ENCODE measurements at regions of chr14 and their contacts with region 1.

Region 1: GRCh38 chr14:23018107-23018506 is 8.2 kb upstream of the C14orf93 start:
- DNase-seq: no peak
- ATAC-seq: no peak
- H3K4me3 ChIP-seq: no peak overlapping the region
- H3K27ac ChIP-seq: no peak overlapping the region
- H3K4me1 ChIP-seq: no peaks in the 10 kb centered on the region
- H3K27me3 ChIP-seq: no peaks in the 10 kb centered on the region
- CTCF ChIP-seq: no peak
- POLR2A ChIP-seq: no peak
- RAD21 ChIP-seq: no peak

Region 2: DNA sequence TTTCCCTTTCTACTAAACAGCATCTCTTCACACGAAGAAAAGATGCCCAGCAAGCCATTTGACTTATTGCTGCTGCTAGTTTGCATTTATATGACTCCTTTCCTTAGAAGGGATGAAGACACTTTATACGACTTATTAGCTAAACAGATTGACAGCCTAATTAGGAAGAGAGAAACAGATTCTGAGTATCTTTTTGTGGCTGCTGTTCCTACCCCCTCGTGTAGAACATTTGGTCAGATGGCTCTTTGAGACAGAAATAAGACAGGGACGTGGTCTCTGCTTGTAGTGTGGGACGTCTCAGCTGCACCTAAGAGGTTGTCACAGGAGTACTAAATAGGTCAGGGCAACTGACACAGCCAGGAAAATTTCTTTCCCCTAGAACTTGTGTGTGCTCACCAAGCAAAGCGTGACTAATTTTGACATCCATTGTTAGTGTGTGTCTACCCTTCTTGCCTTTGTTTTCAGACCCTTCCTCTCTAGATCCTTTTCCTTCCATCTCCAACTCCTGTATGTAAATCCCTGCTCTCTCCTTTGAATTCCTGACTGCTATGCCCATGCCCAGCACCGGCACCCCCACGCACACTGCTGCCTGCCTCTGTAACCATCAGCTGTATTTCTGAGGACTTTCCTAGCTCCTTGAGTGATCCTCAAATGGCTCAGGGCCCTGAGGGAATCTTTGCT is 512.3 kb before region 1 on chr14:
- CTCF ChIA-PET with region 1: no interaction called
- POLR2A ChIA-PET with region 1: no interaction called
- dilution Hi-C with region 1: no loop called
- in situ Hi-C with region 1: no loop called
- intact Hi-C with region 1: no loop called
- DNase-seq: no peak
- ATAC-seq: no peak
- H3K4me3 ChIP-seq: no peak overlapping the region
- H3K27ac ChIP-seq: no peak overlapping the region
- H3K4me1 ChIP-seq: peaks cover 4% of the 10 kb centered on the region
- H3K27me3 ChIP-seq: peaks cover 18% of the 10 kb centered on the region
- CTCF ChIP-seq: no peak
- POLR2A ChIP-seq: no peak
- RAD21 ChIP-seq: no peak

Region 3: GRCh38 chr14:23052182-23052623 is 34.1 kb after region 1 on chr14:
- CTCF ChIA-PET with region 1: no interaction called
- POLR2A ChIA-PET with region 1: no interaction called
- dilution Hi-C with region 1: no loop called
- in situ Hi-C with region 1: no loop called
- intact Hi-C with region 1: loop called (anchors 1 kb)
- DNase-seq: no peak
- ATAC-seq: no peak
- H3K4me3 ChIP-seq: no peak overlapping the region
- H3K27ac ChIP-seq: no peak overlapping the region
- H3K4me1 ChIP-seq: peaks cover 11% of the 10 kb centered on the region
- H3K27me3 ChIP-seq: no peaks in the 10 kb centered on the region
- CTCF ChIP-seq: 0 out of 2 replicates have a peak, but pooled peaks have one; percentile 3
- POLR2A ChIP-seq: no peak
- RAD21 ChIP-seq: peak; percentile 27; the same call in 1 of the 2 replicates

Region 4: DNA sequence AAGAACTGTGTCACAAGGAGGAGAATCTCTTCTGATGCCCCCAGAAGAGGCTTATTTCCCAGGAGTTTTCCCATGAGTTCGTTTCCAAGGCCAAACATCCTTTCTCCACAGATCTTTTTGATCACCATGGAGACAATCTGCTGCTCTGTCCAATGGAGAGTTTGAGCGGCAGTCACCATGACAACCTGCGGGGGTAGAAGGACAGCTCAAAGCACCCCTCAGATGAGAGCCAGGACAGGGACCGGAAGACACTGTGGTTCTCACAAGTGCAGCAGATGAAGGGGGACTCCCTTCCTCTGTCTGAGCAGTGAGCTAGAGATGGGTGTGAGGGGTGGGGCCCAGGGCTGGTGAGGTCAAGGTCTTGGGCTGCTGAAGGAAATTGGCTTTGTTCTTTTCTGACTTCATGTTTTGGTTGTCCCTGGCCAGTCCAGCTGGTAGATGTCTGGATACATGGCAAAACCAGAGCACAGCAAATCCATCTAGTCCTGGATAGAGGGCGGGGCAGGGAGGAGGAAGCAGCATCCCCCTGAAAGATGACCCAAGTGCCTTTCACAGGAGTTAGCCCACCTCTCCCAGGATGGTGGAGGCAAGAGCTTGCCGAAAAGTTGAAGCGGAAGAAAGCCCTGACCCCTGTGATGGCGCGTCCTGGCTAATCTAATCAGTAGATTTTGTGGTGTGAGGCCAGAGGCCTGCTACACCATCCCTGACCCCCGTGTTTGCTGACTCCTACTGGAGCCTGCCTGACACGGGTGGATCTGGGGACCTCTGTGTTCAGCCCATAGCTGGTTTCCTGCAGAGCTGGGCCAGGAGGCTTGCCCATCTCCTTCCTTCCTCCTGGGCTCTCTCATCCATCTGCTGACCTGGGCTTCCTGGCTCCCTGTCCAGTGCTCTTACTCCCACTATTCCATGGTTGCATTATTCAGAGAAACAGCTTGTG is 642.5 kb after region 1 on chr14:
- CTCF ChIA-PET with region 1: no interaction called
- POLR2A ChIA-PET with region 1: no interaction called
- dilution Hi-C with region 1: no loop called
- in situ Hi-C with region 1: no loop called
- intact Hi-C with region 1: no loop called
- DNase-seq: no peak
- ATAC-seq: no peak
- H3K4me3 ChIP-seq: no peak overlapping the region
- H3K27ac ChIP-seq: no peak overlapping the region
- H3K4me1 ChIP-seq: no peaks in the 10 kb centered on the region
- H3K27me3 ChIP-seq: peaks cover 4% of the 10 kb centered on the region; the same call in 1 of the 2 replicates
- CTCF ChIP-seq: no peak
- POLR2A ChIP-seq: no peak
- RAD21 ChIP-seq: no peak

Measured in IMR-90 (cell line).